Mammary epithelial cell (primary cell): ENCODE measurements at regions of chr6 and their contacts with region 1.

Region 1: GRCh38 chr6:121055572-121056163 is 278.6 kb downstream of the TBC1D32 start:
- DNase-seq: peak; percentile 40
- H3K4me3 ChIP-seq: no peak overlapping the region
- H3K27ac ChIP-seq: no peak overlapping the region
- H3K4me1 ChIP-seq: no peaks in the 10 kb centered on the region
- H3K27me3 ChIP-seq: no peaks in the 10 kb centered on the region
- CTCF ChIP-seq: peak; percentile 52 to 74

Region 2: GRCh38 chr6:120908767-120909166 is 146.9 kb before region 1 on chr6:
- CTCF ChIA-PET with region 1: no interaction called
- dilution Hi-C with region 1: no loop called
- in situ Hi-C with region 1: no loop called
- intact Hi-C with region 1: no loop called
- DNase-seq: no peak
- H3K4me3 ChIP-seq: no peak overlapping the region
- H3K27ac ChIP-seq: no peak overlapping the region
- H3K4me1 ChIP-seq: no peaks in the 10 kb centered on the region
- H3K27me3 ChIP-seq: no peaks in the 10 kb centered on the region
- CTCF ChIP-seq: no peak

Region 3: GRCh38 chr6:121032268-121033006 is 23.2 kb before region 1 on chr6:
- CTCF ChIA-PET with region 1: no interaction called
- dilution Hi-C with region 1: no loop called
- in situ Hi-C with region 1: no loop called
- intact Hi-C with region 1: no loop called
- DNase-seq: no peak
- H3K4me3 ChIP-seq: no peak overlapping the region
- H3K27ac ChIP-seq: no peak overlapping the region
- H3K4me1 ChIP-seq: no peaks in the 10 kb centered on the region
- H3K27me3 ChIP-seq: no peaks in the 10 kb centered on the region
- CTCF ChIP-seq: no peak

Region 4: GRCh38 chr6:121222656-121223055 is 167.0 kb after region 1 on chr6:
- CTCF ChIA-PET with region 1: no interaction called
- dilution Hi-C with region 1: no loop called
- in situ Hi-C with region 1: no loop called
- intact Hi-C with region 1: loop called (anchors 1 kb)
- DNase-seq: peak; percentile 39
- H3K4me3 ChIP-seq: no peak overlapping the region
- H3K27ac ChIP-seq: no peak overlapping the region
- H3K4me1 ChIP-seq: no peaks in the 10 kb centered on the region
- H3K27me3 ChIP-seq: no peaks in the 10 kb centered on the region
- CTCF ChIP-seq: peak in 1 of 2 donors; percentile 20

Region 5: GRCh38 chr6:121305957-121306607 is 250.4 kb after region 1 on chr6:
- CTCF ChIA-PET with region 1: interaction called, 5 read pairs
- dilution Hi-C with region 1: no loop called
- in situ Hi-C with region 1: loop called (anchors 10 kb)
- intact Hi-C with region 1: loop called (anchors 1 kb)
- DNase-seq: peak; percentile 30
- H3K4me3 ChIP-seq: no peak overlapping the region
- H3K27ac ChIP-seq: no peak overlapping the region
- H3K4me1 ChIP-seq: peaks cover 14% of the 10 kb centered on the region
- H3K27me3 ChIP-seq: no peaks in the 10 kb centered on the region
- CTCF ChIP-seq: peak; percentile 70 to 76

Region 6: GRCh38 chr6:121382467-121383121 is 326.9 kb after region 1 on chr6:
- CTCF ChIA-PET with region 1: no interaction called
- dilution Hi-C with region 1: no loop called
- in situ Hi-C with region 1: loop called in 1 of 2 experiments (anchors 25 kb)
- intact Hi-C with region 1: no loop called
- DNase-seq: no peak
- H3K4me3 ChIP-seq: no peak overlapping the region
- H3K27ac ChIP-seq: no peak overlapping the region
- H3K4me1 ChIP-seq: no peaks in the 10 kb centered on the region
- H3K27me3 ChIP-seq: no peaks in the 10 kb centered on the region
- CTCF ChIP-seq: no peak

Region 7: GRCh38 chr6:121393731-121394505 is 338.2 kb after region 1 on chr6:
- CTCF ChIA-PET with region 1: no interaction called
- dilution Hi-C with region 1: no loop called
- in situ Hi-C with region 1: loop called (anchors 10 to 25 kb)
- intact Hi-C with region 1: no loop called
- DNase-seq: no peak
- H3K4me3 ChIP-seq: no peak overlapping the region
- H3K27ac ChIP-seq: no peak overlapping the region
- H3K4me1 ChIP-seq: no peaks in the 10 kb centered on the region
- H3K27me3 ChIP-seq: no peaks in the 10 kb centered on the region
- CTCF ChIP-seq: no peak

Region 8: DNA sequence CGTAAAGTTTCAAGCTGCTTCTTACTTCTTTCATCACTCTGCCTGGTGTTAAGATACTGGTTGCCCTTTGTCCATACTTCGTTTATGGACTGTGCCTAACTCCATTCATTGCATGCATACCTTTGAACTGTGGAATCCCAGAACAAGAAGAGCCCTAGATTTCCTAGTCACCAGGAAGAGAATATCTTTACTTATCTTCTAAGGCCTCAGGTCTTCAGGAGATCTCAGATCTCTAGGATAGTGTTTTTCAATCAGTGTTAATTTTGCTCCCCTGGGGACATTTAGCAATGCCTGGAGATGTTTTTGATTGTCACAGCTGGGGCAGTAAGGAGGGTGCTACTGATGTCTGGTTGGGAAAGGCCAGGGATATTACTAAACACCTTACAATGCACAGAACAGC is 344.3 kb after region 1 on chr6:
- CTCF ChIA-PET with region 1: no interaction called
- dilution Hi-C with region 1: no loop called
- in situ Hi-C with region 1: loop called (anchors 10 to 25 kb)
- intact Hi-C with region 1: loop called (anchors 1 kb)
- DNase-seq: no peak
- H3K4me3 ChIP-seq: no peak overlapping the region
- H3K27ac ChIP-seq: no peak overlapping the region
- H3K4me1 ChIP-seq: no peaks in the 10 kb centered on the region
- H3K27me3 ChIP-seq: peaks cover 3% of the 10 kb centered on the region
- CTCF ChIP-seq: no peak